ENCODE measurements at regions of chr13 and their contacts with region 1.

Region 1: GRCh38 chr13:40206241-40207000 is 460.0 kb downstream of the FOXO1 start:
- DNase-seq: peak in 12 of 14 experiments; percentile 35 to 80 (median 54)
- ATAC-seq: peak; percentile 92
- H3K4me3 ChIP-seq: peak overlapping the region; percentile 10
- H3K4me3 Mint-ChIP-seq: peak overlapping the region; percentile 79
- H3K27ac ChIP-seq: peak overlapping the region; percentile 68 to 77
- H3K27ac Mint-ChIP-seq: peak overlapping the region; percentile 97
- H3K4me1 ChIP-seq: peaks cover 56% of the 10 kb centered on the region
- H3K4me1 Mint-ChIP-seq: peaks cover 80% of the 10 kb centered on the region
- H3K27me3 ChIP-seq: no peaks in the 10 kb centered on the region
- H3K27me3 Mint-ChIP-seq: no peaks in the 10 kb centered on the region
- CTCF ChIP-seq: no peak

Region 2: GRCh38 chr13:40069173-40070044 is 137.0 kb before region 1 on chr13:
- CTCF ChIA-PET with region 1: interaction called, 5 read pairs
- POLR2A ChIA-PET with region 1: interaction called, 15 read pairs
- intact Hi-C with region 1: no loop called
- DNase-seq: peak; percentile 54 to 86 (median 67)
- ATAC-seq: peak; percentile 92
- H3K4me3 ChIP-seq: no peak overlapping the region
- H3K4me3 Mint-ChIP-seq: peak overlapping the region; percentile 46
- H3K27ac ChIP-seq: no peak overlapping the region
- H3K27ac Mint-ChIP-seq: peak overlapping the region; percentile 8
- H3K4me1 ChIP-seq: peaks cover 15% of the 10 kb centered on the region
- H3K4me1 Mint-ChIP-seq: peaks cover 38% of the 10 kb centered on the region
- H3K27me3 ChIP-seq: no peaks in the 10 kb centered on the region
- H3K27me3 Mint-ChIP-seq: no peaks in the 10 kb centered on the region
- CTCF ChIP-seq: peak; percentile 91

Region 3: DNA sequence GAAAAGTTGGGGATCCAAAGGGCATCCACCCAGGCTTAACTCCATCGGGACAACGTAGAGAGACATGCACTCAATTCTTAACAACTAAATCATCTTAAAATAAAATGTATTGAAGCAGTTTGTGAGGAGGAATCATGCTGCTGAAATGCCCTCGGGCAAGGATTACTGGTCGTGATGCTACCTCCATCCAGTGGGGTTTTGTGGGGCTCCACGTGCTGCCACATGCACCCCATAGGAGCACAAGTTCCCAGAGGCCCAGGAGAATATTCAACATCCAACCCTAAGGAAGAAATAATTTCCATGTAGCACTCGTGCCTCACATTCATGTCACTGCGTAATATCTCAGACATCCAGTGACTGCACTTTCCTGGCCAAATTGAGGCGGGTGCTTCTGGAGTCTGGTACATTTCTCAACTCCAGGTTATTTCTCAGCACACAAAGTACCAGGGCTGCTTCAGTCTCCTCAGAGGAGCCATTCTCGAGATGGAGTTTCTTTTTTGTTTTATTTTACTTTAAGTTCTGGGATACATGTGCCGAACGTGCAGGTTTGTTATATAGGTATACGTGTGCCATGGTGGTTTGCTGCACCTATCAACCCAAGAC is 30.2 kb after region 1 on chr13:
- CTCF ChIA-PET with region 1: no interaction called
- POLR2A ChIA-PET with region 1: no interaction called
- intact Hi-C with region 1: no loop called
- DNase-seq: no peak
- ATAC-seq: no peak
- H3K4me3 ChIP-seq: no peak overlapping the region
- H3K4me3 Mint-ChIP-seq: no peak overlapping the region
- H3K27ac ChIP-seq: no peak overlapping the region
- H3K27ac Mint-ChIP-seq: no peak overlapping the region
- H3K4me1 ChIP-seq: no peaks in the 10 kb centered on the region
- H3K4me1 Mint-ChIP-seq: peaks cover 3% of the 10 kb centered on the region
- H3K27me3 ChIP-seq: no peaks in the 10 kb centered on the region
- H3K27me3 Mint-ChIP-seq: no peaks in the 10 kb centered on the region
- CTCF ChIP-seq: no peak